ENCODE measurements at regions of chr15 and their contacts with region 1.

Region 1: DNA sequence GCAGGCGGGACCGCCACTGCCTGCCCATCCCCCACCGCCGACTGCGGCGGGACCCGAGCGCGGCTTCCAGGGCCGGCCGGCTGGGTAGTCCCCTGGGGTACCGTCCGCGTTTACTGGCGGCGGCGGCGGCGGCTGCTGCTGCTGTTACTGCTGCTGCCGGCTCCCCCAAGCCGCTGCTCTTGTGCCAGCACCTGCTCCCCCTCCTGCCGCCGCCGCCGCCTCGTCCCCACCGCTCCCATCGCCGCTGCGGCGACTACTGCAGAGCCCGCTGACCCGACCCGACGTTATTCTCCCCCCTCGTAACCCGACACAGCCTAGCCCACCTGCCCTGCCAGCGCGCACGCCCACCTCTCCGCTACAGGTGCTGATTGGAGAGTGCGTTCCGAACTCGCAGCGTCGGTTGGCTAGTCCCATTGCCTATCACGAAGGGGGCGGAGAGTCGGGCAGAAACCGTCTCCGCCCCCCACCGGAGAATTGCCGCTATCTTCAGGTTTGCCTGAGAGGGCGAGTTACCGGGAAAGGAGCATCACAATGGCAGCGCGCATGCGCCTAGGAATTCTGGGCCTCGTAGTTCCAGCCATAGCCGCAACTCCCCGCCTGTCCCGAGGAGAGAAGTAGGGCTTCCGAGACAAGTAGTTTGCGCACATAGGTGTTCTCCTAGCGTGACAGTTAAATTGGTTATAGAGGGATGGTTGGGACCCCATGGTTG is at the start of gene TTBK2:
- DNase-seq: peak; percentile 96
- H3K4me3 Mint-ChIP-seq: peak within 1 kb of the TSS; percentile 98
- H3K27ac Mint-ChIP-seq: peak within 1 kb of the TSS; percentile 94
- H3K4me1 Mint-ChIP-seq: peaks cover 37% of the 10 kb centered on the region
- H3K27me3 Mint-ChIP-seq: no peaks in the 10 kb centered on the region
- total RNA-seq, gene TTBK2: 11.4 and 13.4 TPM in 2 replicates

Region 2: DNA sequence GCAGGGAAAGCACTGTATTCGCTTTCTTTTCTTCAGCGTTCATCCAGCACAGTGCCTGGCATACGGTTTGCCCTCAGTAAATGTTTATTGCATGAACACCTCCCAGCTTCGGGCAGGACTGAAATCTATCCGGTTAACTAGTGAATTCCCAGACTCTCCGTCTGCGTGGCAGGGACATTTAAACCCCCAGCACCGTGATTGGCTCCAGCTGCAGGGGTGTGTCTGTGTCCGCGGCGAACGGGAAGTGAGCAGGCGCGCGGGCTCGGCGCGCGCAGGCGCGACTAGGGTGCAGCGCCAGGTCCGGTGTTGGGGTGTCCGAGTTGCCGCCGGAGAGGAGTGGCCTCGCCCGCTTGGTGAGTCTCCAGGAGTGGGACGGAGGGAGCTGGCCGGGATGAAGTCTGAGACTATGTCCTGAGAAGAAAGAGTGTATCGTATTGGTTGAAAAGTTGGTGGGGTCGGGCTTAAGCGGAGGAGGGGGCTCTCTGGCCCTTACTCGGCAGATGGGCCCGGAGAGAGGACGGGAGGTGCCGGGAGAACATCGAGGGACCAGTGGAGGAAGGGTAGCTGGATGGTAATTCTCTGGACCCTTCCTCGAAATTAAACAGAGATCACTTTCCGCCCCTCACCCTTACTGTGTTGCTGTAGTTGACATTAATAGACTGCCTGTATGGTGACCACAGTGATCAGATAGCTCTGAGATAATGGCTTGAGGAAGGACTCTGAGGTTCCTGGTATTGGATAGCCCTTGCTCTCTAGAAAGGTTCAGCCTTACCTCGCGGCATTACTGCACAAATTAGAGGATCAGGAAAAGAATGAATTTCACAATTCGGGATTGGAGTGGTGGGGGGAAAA is 425.1 kb before region 1 on chr15 and contains the start of gene SNAP23:
- intact Hi-C with region 1: loop called (anchors 1 kb)
- DNase-seq: peak; percentile 84
- H3K4me3 Mint-ChIP-seq: peak within 1 kb of the TSS; percentile 100
- H3K27ac Mint-ChIP-seq: peak within 1 kb of the TSS; percentile 89
- H3K4me1 Mint-ChIP-seq: peaks cover 60% of the 10 kb centered on the region
- H3K27me3 Mint-ChIP-seq: no peaks in the 10 kb centered on the region
- total RNA-seq, gene SNAP23: 73.8 and 87.5 TPM in 2 replicates

Region 3: DNA sequence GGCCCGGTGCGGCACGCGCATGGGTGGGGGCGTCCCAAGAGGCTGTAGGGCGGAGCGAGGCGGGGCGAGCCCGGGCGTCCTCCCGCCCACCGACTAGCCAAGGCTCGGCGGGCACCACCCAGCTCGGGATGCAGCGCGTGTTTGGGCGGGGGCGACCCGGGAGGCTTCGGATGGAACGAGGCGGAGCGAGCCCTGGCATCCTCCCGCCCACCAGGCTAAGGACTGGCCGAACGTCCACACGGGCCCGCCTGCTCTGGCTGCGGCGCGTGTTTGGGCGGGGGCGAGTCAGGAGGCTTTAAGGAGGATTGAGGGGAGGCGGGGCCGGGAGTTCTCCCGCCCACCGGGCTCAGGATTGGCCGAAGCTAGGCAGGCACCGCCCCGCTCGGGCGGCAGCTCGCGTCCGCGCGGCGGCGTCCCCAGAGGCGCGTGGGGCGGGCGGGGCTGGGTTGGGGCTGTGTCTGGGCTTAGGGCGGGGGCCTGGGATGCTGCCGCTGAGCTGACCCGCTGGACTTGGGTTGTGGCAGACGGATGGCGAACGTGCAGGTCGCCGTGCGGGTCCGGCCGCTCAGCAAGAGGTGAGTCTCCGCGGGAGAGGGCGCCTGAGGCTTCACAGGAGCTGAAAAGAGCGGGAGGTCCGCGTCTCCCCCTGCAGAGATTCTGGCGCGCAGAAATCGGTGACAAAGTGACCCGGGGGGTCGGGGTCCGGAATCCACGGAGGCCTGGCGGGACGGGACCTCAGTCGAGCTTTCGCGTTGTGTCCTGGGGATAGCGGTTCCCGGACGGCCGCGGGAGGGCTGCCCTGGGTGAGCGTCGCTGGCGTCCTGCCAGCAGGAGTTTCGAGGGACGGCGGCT is 345.3 kb before region 1 on chr15 and contains the start of gene STARD9:
- intact Hi-C with region 1: loop called (anchors 1 kb)
- DNase-seq: peak; percentile 93
- H3K4me3 Mint-ChIP-seq: peak within 1 kb of the TSS; percentile 92
- H3K27ac Mint-ChIP-seq: peak within 1 kb of the TSS; percentile 72
- H3K4me1 Mint-ChIP-seq: peaks cover 35% of the 10 kb centered on the region
- H3K27me3 Mint-ChIP-seq: peaks cover 24% of the 10 kb centered on the region
- total RNA-seq, gene STARD9: 6.1 and 9.2 TPM in 2 replicates

Region 4: GRCh38 chr15:42736793-42737528 is 183.7 kb before region 1 on chr15 and contains the start of gene CDAN1:
- intact Hi-C with region 1: loop called (anchors 1 kb)
- DNase-seq: peak; percentile 89
- H3K4me3 Mint-ChIP-seq: peak within 1 kb of the TSS; percentile 78
- H3K27ac Mint-ChIP-seq: peak within 1 kb of the TSS; percentile 65
- H3K4me1 Mint-ChIP-seq: peaks cover 7% of the 10 kb centered on the region
- H3K27me3 Mint-ChIP-seq: no peaks in the 10 kb centered on the region
- total RNA-seq, gene CDAN1: 24.0 and 26.7 TPM in 2 replicates